ENCODE measurements at regions of chr1 and their contacts with region 1.

Region 1: GRCh38 chr1:154558575-154559465 is at the start of gene UBE2Q1:
- DNase-seq: peak; percentile 98
- ATAC-seq: peak; percentile 88
- H3K4me3 Mint-ChIP-seq: peak within 1 kb of the TSS; percentile 95
- H3K27ac Mint-ChIP-seq: peak within 1 kb of the TSS; percentile 91
- H3K4me1 Mint-ChIP-seq: peaks cover 35% of the 10 kb centered on the region
- H3K27me3 Mint-ChIP-seq: no peaks in the 10 kb centered on the region
- CTCF ChIP-seq: no peak
- total RNA-seq, gene UBE2Q1: 96.5 and 104 TPM in 2 replicates

Region 2: GRCh38 chr1:154324669-154325582 is 233.9 kb before region 1 on chr1 and contains the start of gene ATP8B2:
- CTCF ChIA-PET with region 1: no interaction called
- POLR2A ChIA-PET with region 1: interaction called, 3 read pairs
- intact Hi-C with region 1: loop called (anchors 2 kb)
- DNase-seq: peak; percentile 74
- ATAC-seq: peak; percentile 67
- H3K4me3 Mint-ChIP-seq: peak within 1 kb of the TSS; percentile 95
- H3K27ac Mint-ChIP-seq: peak within 1 kb of the TSS; percentile 88
- H3K4me1 Mint-ChIP-seq: peaks cover 41% of the 10 kb centered on the region
- H3K27me3 Mint-ChIP-seq: peaks cover 17% of the 10 kb centered on the region
- CTCF ChIP-seq: peak; percentile 71
- total RNA-seq, gene ATP8B2: 24.3 and 27.3 TPM in 2 replicates

Region 3: GRCh38 chr1:154607609-154608396 is 49.0 kb after region 1 on chr1 and contains the start of gene ADAR:
- CTCF ChIA-PET with region 1: interaction called, 4 read pairs
- POLR2A ChIA-PET with region 1: no interaction called
- intact Hi-C with region 1: loop called (anchors 1 kb)
- DNase-seq: peak; percentile 80
- ATAC-seq: peak; percentile 91
- H3K4me3 Mint-ChIP-seq: peak within 1 kb of the TSS; percentile 89
- H3K27ac Mint-ChIP-seq: peak within 1 kb of the TSS; percentile 90
- H3K4me1 Mint-ChIP-seq: peaks cover 73% of the 10 kb centered on the region
- H3K27me3 Mint-ChIP-seq: no peaks in the 10 kb centered on the region
- CTCF ChIP-seq: no peak
- total RNA-seq, gene ADAR: 209 and 216 TPM in 2 replicates

Region 4: GRCh38 chr1:154760469-154760933 is 201.7 kb after region 1 on chr1:
- CTCF ChIA-PET with region 1: interaction called, 39 read pairs
- POLR2A ChIA-PET with region 1: interaction called, 3 read pairs
- intact Hi-C with region 1: loop called (anchors 1 kb)
- DNase-seq: peak; percentile 86
- ATAC-seq: peak; percentile 98
- H3K4me3 Mint-ChIP-seq: no peak overlapping the region
- H3K27ac Mint-ChIP-seq: no peak overlapping the region
- H3K4me1 Mint-ChIP-seq: no peaks in the 10 kb centered on the region
- H3K27me3 Mint-ChIP-seq: peaks cover 27% of the 10 kb centered on the region
- CTCF ChIP-seq: no peak

Region 5: DNA sequence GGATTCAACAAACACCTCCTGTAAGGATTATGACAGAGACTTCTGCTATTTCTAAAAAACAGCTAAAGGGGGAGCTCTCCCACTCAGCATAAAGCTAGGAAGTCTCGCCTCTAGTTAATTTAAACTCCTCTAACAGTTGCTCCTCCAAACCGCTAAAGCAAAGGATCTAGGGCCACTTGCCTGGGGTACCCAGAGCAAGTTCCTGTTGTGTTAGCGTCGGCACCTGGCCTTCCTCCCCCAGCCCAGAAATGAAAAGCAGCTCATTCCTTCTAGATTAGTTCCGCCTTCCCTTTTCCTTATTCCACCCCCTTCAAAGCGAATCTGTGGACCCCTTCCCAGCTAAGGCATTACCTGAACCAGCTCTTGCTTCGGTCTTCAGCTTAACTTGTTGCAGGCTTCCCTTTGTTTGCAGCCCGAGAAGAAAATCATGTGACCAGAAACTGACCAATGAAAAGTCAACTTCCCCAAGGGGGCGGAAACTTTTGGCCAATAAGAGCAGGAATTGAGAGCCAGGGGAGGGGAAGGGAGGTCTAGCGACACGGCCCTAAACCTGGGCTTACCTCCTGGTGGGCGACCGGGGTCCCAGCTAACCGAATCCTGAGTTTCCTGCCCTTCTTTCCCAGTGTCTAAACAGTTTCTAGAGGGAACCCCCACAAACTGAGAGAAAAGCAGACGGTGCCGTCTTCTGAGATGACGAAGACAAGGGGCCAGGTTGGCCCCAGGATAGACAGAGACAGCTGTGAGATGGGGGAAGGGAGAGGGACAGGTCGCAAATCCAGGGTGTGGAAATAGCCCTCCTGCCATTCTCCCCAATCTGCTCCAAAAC is 397.1 kb after region 1 on chr1 and contains the start of gene PBXIP1:
- CTCF ChIA-PET with region 1: interaction called, 3 read pairs
- POLR2A ChIA-PET with region 1: interaction called, 5 read pairs
- intact Hi-C with region 1: loop called (anchors 5 kb)
- DNase-seq: peak; percentile 52
- ATAC-seq: peak; percentile 72
- H3K4me3 Mint-ChIP-seq: peak within 1 kb of the TSS; percentile 91
- H3K27ac Mint-ChIP-seq: peak within 1 kb of the TSS; percentile 93
- H3K4me1 Mint-ChIP-seq: peaks cover 81% of the 10 kb centered on the region
- H3K27me3 Mint-ChIP-seq: no peaks in the 10 kb centered on the region
- CTCF ChIP-seq: no peak
- total RNA-seq, gene PBXIP1: 42.4 and 43.2 TPM in 2 replicates

Region 6: DNA sequence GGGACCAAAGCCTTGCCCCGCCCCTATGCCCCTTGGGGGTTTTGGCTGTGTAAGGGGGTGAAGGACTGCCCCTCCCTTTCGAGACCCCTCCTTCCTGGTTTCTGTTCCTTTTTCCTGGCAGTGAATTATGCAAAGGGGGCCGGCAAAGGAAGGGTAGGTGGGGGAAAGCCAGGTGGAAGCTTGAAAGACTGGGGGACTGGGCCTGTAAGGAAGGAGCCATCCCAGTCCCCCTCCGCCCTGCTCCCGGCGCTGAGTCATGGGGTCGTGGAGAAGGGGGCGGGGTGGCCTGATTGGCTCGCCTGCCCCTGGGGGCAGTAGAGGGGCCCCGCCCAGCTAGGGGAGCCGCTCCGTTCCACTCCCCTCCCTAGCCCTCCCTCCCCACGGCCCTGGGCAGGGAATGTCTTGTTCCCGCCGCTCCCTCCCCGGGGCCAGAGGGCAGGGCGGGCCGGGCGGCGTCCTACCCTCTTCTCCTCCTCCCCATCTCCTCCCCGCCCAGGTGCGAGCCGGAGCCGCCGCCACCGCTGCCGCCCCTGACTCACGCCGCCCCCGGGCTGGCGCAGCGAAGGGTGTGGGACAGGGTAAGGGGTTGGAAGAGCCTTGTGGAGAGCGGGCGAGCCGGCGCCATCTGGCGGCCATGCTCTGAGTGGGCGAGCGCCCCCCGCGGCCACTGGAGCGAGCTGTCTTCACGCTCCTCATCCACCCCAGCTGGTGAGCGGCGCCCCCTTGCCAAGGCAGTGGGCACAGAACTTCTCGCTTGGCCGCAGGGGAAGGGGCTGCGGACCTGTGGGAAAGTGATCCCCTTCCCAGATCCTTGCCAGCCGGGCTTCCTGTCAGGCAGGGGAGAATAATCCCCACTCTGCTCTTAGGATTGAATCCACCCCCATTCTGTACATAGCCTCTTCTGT is 458.5 kb after region 1 on chr1:
- CTCF ChIA-PET with region 1: interaction called, 15 read pairs
- POLR2A ChIA-PET with region 1: interaction called, 5 read pairs
- intact Hi-C with region 1: loop called (anchors 1 kb)
- DNase-seq: peak; percentile 88
- ATAC-seq: peak; percentile 77
- H3K4me3 Mint-ChIP-seq: peak overlapping the region; percentile 79
- H3K27ac Mint-ChIP-seq: peak overlapping the region; percentile 88
- H3K4me1 Mint-ChIP-seq: peaks cover 71% of the 10 kb centered on the region
- H3K27me3 Mint-ChIP-seq: no peaks in the 10 kb centered on the region
- CTCF ChIP-seq: no peak

Region 7: DNA sequence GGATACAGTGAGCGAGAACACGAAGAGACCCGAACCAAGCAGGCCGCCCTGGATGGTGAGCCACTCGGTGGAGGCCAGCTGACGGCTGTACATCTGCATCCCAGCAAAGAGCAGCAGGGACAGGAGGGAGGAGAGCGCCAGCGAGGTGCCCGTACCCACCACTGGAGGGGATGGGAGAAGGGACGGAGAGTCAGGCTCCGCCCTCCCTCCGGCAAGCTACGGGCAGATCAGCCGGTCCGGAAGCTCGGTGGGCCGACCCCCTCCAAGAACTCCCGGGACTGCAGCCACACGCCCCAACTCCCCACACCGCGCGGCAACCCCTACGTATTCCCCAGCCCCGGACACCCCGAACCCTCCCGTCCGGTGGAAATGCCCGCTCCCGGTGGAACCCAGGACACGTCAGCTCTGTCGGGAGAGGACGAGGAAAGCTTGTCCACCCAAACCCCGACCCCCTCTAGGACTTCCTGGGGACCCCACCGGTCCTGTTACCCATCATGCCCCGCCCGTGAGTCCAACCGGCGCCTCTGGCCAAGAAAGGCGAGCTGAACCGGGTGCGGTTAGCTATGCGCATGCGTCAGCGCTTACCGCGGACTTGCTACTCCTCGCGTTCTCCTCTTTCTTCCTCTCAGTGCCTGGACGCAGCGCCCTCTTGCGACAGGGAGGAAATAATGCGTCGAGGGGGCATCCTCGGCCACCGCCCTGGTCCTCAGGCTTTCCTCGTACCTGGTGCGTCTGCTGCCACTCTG is 614.1 kb after region 1 on chr1 and contains the start of gene KRTCAP2:
- CTCF ChIA-PET with region 1: no interaction called
- POLR2A ChIA-PET with region 1: no interaction called
- intact Hi-C with region 1: loop called (anchors 10 kb)
- DNase-seq: peak; percentile 87
- ATAC-seq: peak; percentile 85
- H3K4me3 Mint-ChIP-seq: peak within 1 kb of the TSS; percentile 99
- H3K27ac Mint-ChIP-seq: peak within 1 kb of the TSS; percentile 98
- H3K4me1 Mint-ChIP-seq: peaks cover 33% of the 10 kb centered on the region
- H3K27me3 Mint-ChIP-seq: no peaks in the 10 kb centered on the region
- CTCF ChIP-seq: peak; percentile 97
- total RNA-seq, gene KRTCAP2: 128 and 132 TPM in 2 replicates

Measured in activated B cell treated with CpG ODN at 0.5 μM for 24 hours (primary cell).